ENCODE measurements at regions of chr2 and their contacts with region 1.

Region 1: DNA sequence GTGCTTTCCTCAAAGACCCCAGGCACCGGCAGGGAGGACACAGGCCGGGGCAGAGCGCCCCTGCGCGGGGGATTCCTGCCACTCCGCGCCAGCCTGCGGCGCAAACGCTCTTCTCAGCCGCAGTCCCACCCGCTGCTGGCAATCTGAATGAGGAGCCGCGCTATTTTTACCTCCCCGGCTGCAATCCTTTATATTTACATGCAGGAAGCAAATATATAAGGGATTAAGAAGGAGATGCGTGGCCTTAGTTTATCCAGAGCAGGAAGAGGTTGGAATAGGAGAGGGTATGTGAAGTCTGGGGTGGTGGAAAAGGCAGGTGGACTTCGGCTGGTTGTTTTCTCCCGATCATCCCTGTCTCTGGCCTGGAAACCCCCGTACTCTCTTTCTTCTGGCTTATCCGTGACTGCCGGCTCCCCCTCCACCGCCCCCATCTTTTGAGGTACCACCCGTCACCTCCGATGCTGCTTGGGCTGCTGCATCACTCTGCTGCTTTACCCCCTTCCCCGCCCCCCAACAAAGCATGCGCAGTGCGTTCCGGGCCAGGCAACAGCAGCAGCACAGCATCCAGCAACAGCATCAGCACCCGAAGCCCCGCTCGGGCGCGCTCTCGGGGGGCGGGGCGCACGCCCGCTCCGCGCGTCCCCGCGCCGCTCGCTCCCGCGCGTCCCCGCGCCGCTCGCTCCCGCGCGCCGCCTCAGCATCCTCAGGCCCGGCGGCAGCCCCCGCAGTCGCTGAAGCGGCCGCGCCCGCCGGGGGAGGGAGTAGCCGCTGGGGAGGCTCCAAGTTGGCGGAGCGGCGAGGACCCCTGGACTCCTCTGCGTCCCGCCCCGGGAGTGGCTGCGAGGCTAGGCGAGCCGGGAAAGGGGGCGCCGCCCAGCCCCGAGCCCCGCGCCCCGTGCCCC is at the start of gene ADAM23:
- DNase-seq: peak; percentile 65 to 73
- H3K4me3 ChIP-seq: peak within 1 kb of the TSS; percentile 78
- H3K4me3 Mint-ChIP-seq: peak within 1 kb of the TSS; percentile 85
- H3K27ac Mint-ChIP-seq: peak within 1 kb of the TSS; percentile 48
- H3K4me1 ChIP-seq: peaks cover 36% of the 10 kb centered on the region
- H3K4me1 Mint-ChIP-seq: peaks cover 21% of the 10 kb centered on the region
- H3K27me3 ChIP-seq: no peaks in the 10 kb centered on the region
- H3K27me3 Mint-ChIP-seq: peaks cover 2% of the 10 kb centered on the region
- CTCF ChIP-seq: peak in 1 of 2 experiments; percentile 31
- total RNA-seq, gene ADAM23: 46.8 and 55.1 TPM in 2 replicates

Region 2: DNA sequence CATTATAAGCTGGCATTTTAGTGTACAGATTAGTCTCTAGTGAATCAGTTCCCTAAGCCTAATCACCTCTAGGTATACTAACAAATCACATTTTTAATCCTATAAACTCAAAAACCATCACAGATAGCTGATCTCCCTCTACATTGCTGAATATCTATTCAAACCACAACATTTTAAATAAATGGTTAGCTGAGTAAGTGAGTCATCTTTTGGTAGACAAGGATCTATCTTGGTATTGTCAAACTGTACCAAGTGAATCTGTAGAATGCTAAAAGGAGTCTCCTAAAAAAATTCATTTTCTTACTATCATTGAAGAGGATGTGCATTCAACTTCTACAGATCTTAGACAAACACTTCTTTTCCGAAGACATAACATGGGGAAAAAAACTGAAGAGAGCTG is 397.8 kb before region 1 on chr2:
- CTCF ChIA-PET with region 1: no interaction called
- POLR2A ChIA-PET with region 1: interaction called, 20 read pairs
- intact Hi-C with region 1: no loop called
- DNase-seq: no peak
- H3K4me3 ChIP-seq: no peak overlapping the region
- H3K4me3 Mint-ChIP-seq: no peak overlapping the region
- H3K27ac Mint-ChIP-seq: no peak overlapping the region
- H3K4me1 ChIP-seq: peaks cover 6% of the 10 kb centered on the region
- H3K4me1 Mint-ChIP-seq: no peaks in the 10 kb centered on the region
- H3K27me3 ChIP-seq: no peaks in the 10 kb centered on the region
- H3K27me3 Mint-ChIP-seq: no peaks in the 10 kb centered on the region
- CTCF ChIP-seq: no peak

Region 3: GRCh38 chr2:206392118-206392517 is 51.0 kb before region 1 on chr2:
- CTCF ChIA-PET with region 1: no interaction called
- POLR2A ChIA-PET with region 1: no interaction called
- intact Hi-C with region 1: loop called (anchors 1 kb)
- DNase-seq: peak; percentile 46 to 68
- H3K4me3 ChIP-seq: no peak overlapping the region
- H3K4me3 Mint-ChIP-seq: no peak overlapping the region
- H3K27ac Mint-ChIP-seq: no peak overlapping the region
- H3K4me1 ChIP-seq: no peaks in the 10 kb centered on the region
- H3K4me1 Mint-ChIP-seq: peaks cover 4% of the 10 kb centered on the region
- H3K27me3 ChIP-seq: no peaks in the 10 kb centered on the region
- H3K27me3 Mint-ChIP-seq: no peaks in the 10 kb centered on the region
- CTCF ChIP-seq: peak; percentile 73 to 85

Region 4: DNA sequence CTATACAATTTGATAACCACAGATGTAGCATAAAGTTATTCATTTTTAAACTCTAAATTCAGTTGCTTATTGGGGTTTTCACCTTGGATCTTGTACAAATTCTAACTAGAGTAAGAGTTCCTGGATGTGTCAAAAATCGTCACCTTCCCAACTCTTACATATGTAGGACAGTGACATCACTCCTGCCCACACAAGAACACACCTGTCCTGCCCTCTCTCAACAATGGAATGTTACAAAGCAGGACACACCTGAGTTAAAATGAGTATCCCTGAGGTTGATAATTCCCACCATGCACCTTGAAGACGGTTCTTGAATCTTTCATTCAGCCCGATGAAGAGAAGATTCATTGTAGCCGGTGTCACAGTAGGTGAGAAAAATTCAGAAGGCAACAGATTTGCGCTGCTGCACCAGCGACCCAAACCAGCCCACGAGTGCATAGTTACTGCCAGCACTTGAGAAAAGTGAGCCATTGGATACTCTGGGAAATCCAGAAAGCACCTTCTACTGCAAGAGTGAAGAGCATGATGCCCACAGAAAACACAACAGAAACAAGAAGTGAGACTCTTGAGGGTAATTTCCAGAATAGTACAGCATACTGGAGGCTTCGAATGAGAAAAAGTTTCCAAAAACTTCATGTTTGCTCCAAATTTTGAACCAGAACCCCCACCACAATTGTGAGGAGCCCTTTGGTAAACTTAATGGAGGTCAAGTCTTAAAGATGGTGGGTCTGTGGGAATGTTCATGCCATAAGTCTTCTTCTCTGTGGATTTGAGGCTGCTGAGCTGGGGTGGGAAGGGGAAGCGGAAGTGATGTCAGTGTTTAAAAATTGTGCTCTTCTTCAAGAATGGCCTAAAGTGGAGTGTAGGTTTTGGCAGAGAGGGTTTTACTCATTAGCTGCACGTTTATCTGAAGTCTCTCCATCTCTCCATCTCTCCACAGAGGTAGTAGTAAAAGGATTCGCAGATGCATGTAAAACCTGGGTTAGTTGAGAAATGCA is 34.5 kb before region 1 on chr2:
- CTCF ChIA-PET with region 1: no interaction called
- POLR2A ChIA-PET with region 1: no interaction called
- intact Hi-C with region 1: loop called (anchors 2 kb)
- DNase-seq: no peak
- H3K4me3 ChIP-seq: no peak overlapping the region
- H3K4me3 Mint-ChIP-seq: no peak overlapping the region
- H3K27ac Mint-ChIP-seq: no peak overlapping the region
- H3K4me1 ChIP-seq: no peaks in the 10 kb centered on the region; the same call in 1 of the 2 replicates
- H3K4me1 Mint-ChIP-seq: no peaks in the 10 kb centered on the region
- H3K27me3 ChIP-seq: no peaks in the 10 kb centered on the region
- H3K27me3 Mint-ChIP-seq: no peaks in the 10 kb centered on the region
- CTCF ChIP-seq: no peak

Region 5: DNA sequence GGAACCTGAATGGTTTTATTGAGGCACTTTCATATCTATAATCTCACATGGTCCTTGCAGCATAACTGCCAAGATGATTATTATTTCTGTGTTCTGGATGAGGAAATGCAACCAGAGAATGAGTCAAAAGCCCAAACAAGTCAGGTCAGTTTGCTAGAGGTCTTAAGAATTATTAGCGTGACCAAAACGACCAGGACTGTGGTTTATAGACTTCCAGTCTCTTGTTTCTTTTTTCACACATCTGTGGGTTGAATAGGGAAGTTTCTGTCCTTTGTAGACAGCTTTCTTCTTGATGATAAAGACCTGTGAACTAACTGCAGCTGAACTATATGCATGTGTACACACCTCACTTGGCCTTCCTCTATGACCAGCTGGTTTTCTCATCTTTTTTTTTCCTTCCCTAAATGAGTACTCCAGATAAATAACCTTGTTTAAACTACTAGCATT is 14.1 kb after region 1 on chr2:
- CTCF ChIA-PET with region 1: no interaction called
- POLR2A ChIA-PET with region 1: no interaction called
- intact Hi-C with region 1: no loop called
- DNase-seq: no peak
- H3K4me3 ChIP-seq: no peak overlapping the region
- H3K4me3 Mint-ChIP-seq: no peak overlapping the region
- H3K27ac Mint-ChIP-seq: peak overlapping the region; percentile 16
- H3K4me1 ChIP-seq: peaks cover 39% of the 10 kb centered on the region
- H3K4me1 Mint-ChIP-seq: peaks cover 25% of the 10 kb centered on the region
- H3K27me3 ChIP-seq: no peaks in the 10 kb centered on the region
- H3K27me3 Mint-ChIP-seq: no peaks in the 10 kb centered on the region
- CTCF ChIP-seq: no peak

Region 6: DNA sequence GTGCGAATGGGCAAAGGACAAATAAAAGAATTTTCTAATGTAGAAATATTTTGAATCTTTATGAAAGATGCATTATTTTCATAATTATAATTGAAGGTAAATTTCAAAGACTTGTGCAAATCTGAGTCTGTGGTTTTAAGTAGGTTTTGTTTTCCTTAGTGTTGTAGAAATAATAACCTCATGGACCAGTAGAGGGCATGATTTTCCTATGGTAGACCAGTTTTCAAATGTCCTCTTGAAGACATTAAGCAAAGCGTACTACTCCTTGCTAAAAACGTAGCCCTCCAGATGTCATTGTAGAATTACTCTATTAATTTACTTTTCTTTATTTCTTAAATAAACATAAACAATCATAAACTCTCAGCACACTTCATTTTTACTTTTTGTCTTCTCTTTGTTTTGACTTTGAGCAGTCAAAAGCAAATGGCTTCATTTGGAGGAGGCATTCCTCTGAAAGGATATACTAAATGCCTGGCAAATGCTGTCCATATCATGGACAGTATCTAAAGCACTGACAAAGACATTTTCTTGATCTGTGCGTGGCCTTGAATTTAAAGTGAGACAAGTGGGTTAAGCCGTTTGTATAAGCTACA is 113.4 kb after region 1 on chr2:
- CTCF ChIA-PET with region 1: no interaction called
- POLR2A ChIA-PET with region 1: no interaction called
- intact Hi-C with region 1: loop called (anchors 5 kb)
- DNase-seq: peak in 1 of 2 experiments; percentile 30
- H3K4me3 ChIP-seq: no peak overlapping the region
- H3K4me3 Mint-ChIP-seq: no peak overlapping the region
- H3K27ac Mint-ChIP-seq: no peak overlapping the region
- H3K4me1 ChIP-seq: no peaks in the 10 kb centered on the region
- H3K4me1 Mint-ChIP-seq: no peaks in the 10 kb centered on the region
- H3K27me3 ChIP-seq: no peaks in the 10 kb centered on the region
- H3K27me3 Mint-ChIP-seq: no peaks in the 10 kb centered on the region
- CTCF ChIP-seq: peak; percentile 43 to 56